Activated naive CD4-positive, alpha-beta T cell treated with anti-CD3 and anti-CD28 coated beads, Interleukin-2, amount 10 ng/mL, durations not matched to agents 7 days and 5 days (primary cell): ENCODE measurements at regions of chr5 and their contacts with region 1.

Region 1: GRCh38 chr5:142748568-142749249 is 21.5 kb upstream of the ARHGAP26 start:
- DNase-seq: peak; percentile 67
- H3K4me3 Mint-ChIP-seq: no peak overlapping the region
- H3K27ac Mint-ChIP-seq: no peak overlapping the region
- H3K4me1 Mint-ChIP-seq: peaks cover 8% of the 10 kb centered on the region
- H3K27me3 Mint-ChIP-seq: peaks cover 15% of the 10 kb centered on the region

Region 2: DNA sequence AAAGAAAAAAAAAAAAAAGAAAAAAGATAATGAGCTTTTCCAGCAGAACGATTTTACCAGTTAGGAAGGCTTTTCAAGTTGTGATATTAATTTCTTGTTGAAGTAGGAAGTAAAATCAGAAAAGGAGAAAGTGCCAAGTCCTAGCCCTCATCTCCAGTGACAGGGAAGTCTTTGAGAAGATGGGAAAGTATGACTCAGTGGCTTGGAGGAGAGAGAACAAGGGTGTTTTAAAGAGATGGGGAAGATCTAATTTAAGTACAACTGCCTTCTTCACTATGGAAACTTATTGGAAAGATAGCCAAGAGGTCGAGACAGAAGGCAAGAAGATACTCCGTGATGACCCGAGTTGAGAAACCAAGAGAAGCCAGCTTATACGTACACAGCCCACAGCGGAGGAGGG is 85.5 kb before region 1 on chr5:
- CTCF ChIA-PET with region 1: no interaction called
- DNase-seq: no peak
- H3K4me3 Mint-ChIP-seq: no peak overlapping the region
- H3K27ac Mint-ChIP-seq: no peak overlapping the region
- H3K4me1 Mint-ChIP-seq: no peaks in the 10 kb centered on the region
- H3K27me3 Mint-ChIP-seq: peaks cover 17% of the 10 kb centered on the region

Region 3: GRCh38 chr5:142713121-142713706 is 35.5 kb before region 1 on chr5:
- CTCF ChIA-PET with region 1: interaction called, 23 read pairs
- DNase-seq: peak; percentile 87
- H3K4me3 Mint-ChIP-seq: peak overlapping the region; percentile 68
- H3K27ac Mint-ChIP-seq: no peak overlapping the region
- H3K4me1 Mint-ChIP-seq: peaks cover 6% of the 10 kb centered on the region
- H3K27me3 Mint-ChIP-seq: peaks cover 32% of the 10 kb centered on the region

Region 4: DNA sequence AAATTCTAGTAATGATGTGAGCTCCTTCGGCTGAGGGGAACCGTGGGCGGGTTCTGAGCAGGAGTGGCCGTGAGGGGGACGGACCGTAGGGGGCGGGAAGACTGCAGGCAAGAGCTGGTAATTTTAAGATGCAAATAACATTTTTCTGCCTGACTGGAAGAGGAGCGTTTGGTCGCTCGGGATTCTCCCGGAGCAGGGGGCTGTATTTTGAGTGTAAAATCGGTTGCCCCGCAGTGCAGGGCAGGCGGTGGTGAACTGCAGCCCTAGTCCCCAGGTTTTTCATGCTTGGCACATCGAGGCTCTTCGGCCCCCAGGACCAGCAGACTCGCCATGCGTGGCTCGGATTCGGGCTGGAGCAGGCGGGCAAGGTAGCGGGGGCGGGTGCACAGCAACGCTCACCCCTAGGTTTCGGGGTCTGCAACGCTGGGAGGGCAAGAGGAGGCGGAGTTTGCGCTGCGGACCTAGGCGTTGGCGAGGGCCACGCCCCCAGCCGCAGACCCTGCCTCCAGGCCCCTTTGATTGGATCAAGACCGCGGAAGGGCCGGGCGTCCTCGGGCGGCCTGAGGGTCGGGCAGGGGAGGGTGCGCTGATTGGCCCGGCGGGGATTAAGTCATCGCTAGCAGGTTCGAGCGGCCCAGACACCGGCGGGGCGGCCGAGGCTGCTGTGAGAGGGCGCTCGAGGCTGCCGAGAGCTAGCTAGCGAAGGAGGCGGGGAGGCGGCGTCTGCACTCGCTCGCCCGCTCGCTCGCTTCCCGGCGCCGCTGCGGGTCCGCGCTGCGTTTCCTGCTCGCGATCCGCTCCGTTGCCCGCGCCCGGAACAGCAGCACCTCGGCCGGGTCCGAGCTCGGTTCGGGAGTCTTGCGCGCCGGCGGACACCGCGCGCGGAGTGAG is 21.3 kb after region 1 on chr5 and contains the start of gene ARHGAP26:
- CTCF ChIA-PET with region 1: interaction called, 22 read pairs
- DNase-seq: peak; percentile 96
- H3K4me3 Mint-ChIP-seq: peak within 1 kb of the TSS; percentile 93
- H3K27ac Mint-ChIP-seq: peak within 1 kb of the TSS; percentile 88
- H3K4me1 Mint-ChIP-seq: peaks cover 34% of the 10 kb centered on the region
- H3K27me3 Mint-ChIP-seq: no peaks in the 10 kb centered on the region

Region 5: GRCh38 chr5:142800776-142801494 is 52.2 kb after region 1 on chr5:
- CTCF ChIA-PET with region 1: interaction called, 21 read pairs
- DNase-seq: peak; percentile 72
- H3K4me3 Mint-ChIP-seq: peak overlapping the region; percentile 41
- H3K27ac Mint-ChIP-seq: peak overlapping the region; percentile 98
- H3K4me1 Mint-ChIP-seq: peaks cover 64% of the 10 kb centered on the region
- H3K27me3 Mint-ChIP-seq: no peaks in the 10 kb centered on the region

Region 6: GRCh38 chr5:142862594-142862993 is 113.9 kb after region 1 on chr5:
- CTCF ChIA-PET with region 1: interaction called, 118 read pairs
- DNase-seq: no peak
- H3K4me3 Mint-ChIP-seq: no peak overlapping the region
- H3K27ac Mint-ChIP-seq: no peak overlapping the region
- H3K4me1 Mint-ChIP-seq: peaks cover 25% of the 10 kb centered on the region
- H3K27me3 Mint-ChIP-seq: no peaks in the 10 kb centered on the region

Region 7: GRCh38 chr5:142881076-142881783 is 132.5 kb after region 1 on chr5:
- CTCF ChIA-PET with region 1: interaction called, 169 read pairs
- DNase-seq: no peak
- H3K4me3 Mint-ChIP-seq: no peak overlapping the region
- H3K27ac Mint-ChIP-seq: no peak overlapping the region
- H3K4me1 Mint-ChIP-seq: no peaks in the 10 kb centered on the region
- H3K27me3 Mint-ChIP-seq: no peaks in the 10 kb centered on the region